ENCODE measurements at regions of chr11 and their contacts with region 1.

Region 1: GRCh38 chr11:84384731-84385130 is 1098.6 kb upstream of the CCDC90B start:
- DNase-seq: peak in 2 of 5 donors; percentile 24 to 26
- ATAC-seq: no peak
- H3K4me3 ChIP-seq: no peak overlapping the region
- H3K27ac ChIP-seq: no peak overlapping the region
- H3K4me1 ChIP-seq: no peaks in the 10 kb centered on the region
- H3K27me3 ChIP-seq: no peaks in the 10 kb centered on the region
- CTCF ChIP-seq: peak; percentile 68 to 83 (median 78)
- POLR2A ChIP-seq: no peak

Region 2: DNA sequence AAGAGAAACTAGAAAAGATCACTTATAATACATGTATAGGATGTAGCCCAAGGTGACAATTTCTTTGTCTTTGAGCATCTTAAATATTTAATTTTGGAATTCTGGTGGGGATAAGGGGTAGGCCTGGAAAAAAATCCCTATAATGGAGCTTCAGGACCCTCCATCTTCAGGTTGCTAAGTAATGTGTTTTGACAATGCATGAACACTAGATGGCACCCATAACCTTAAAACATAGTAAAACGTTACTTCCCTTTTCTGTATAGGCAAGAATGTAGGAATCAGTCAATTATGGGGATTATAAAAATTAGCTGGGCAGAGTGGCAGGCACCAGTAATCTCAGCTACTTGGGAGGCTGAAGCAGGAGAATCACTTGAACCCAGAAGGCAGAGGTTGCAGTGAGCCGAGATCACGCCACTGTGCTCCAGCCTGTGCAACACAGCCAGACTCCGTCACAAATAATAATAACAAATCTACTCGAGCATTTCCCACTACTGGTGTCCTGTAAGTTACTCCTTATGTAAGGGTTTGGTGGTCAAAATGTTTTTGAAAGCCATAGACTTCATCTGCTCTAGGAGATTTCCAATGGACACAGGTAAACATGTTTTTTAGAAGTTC is 556.7 kb before region 1 on chr11:
- intact Hi-C with region 1: loop called in 5 of 10 experiments (anchors 10 kb)
- DNase-seq: no peak
- ATAC-seq: peak in 2 of 4 donors; percentile 34 to 49
- H3K4me3 ChIP-seq: peak overlapping the region in 5 of 12 donors; percentile 8 to 50 (median 34)
- H3K27ac ChIP-seq: no peak overlapping the region
- H3K4me1 ChIP-seq: peaks cover 0 to 5% (median 0%) of the 10 kb centered on the region in 12 donors
- H3K27me3 ChIP-seq: no peaks in the 10 kb centered on the region
- CTCF ChIP-seq: peak; percentile 25 to 67 (median 52)
- POLR2A ChIP-seq: no peak